CD4-positive, alpha-beta T cell (primary cell): ENCODE measurements at regions of chr15 and their contacts with region 1.

Region 1: DNA sequence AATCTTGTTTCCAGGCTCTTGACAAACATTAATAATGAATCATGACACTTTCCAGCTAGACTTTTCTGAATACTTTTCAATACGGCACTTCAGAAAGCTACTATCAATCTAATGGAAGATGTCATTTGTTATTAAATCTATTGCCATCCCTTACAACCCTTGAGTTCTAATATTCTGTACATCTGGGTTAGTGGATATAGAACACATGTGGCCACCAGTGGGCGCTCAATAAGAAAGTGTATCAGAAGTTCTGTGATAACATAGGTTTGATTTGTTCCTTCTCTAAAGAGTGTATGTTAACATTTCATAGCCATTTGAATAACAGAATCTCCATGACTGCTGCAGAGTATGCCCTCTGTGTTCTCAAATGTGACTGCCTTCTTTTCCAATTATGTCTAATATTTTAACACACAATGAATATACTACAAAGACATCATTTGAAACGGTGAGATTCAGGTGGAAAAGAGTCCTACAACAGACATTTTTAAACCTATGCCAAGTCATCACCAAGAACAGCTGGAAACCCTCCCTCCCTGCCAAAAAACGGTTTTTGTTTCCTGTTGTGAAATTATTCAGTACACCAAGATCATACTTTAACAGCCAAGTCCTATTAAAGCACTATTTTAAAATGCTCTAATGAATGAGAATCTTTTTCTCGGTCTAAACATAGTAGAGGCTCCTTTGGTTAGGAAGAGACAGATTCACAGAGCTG is 22.2 kb downstream of the ALDH1A2 start:
- DNase-seq: peak in 9 of 14 experiments; percentile 13 to 56 (median 37)
- ATAC-seq: no peak
- H3K4me3 ChIP-seq: no peak overlapping the region
- H3K4me3 Mint-ChIP-seq: no peak overlapping the region
- H3K27ac ChIP-seq: no peak overlapping the region
- H3K27ac Mint-ChIP-seq: no peak overlapping the region
- H3K4me1 ChIP-seq: no peaks in the 10 kb centered on the region
- H3K4me1 Mint-ChIP-seq: no peaks in the 10 kb centered on the region
- H3K27me3 ChIP-seq: peaks cover 2 to 18% of the 10 kb centered on the region in 2 experiments
- H3K27me3 Mint-ChIP-seq: peaks cover 65% of the 10 kb centered on the region
- CTCF ChIP-seq: peak; percentile 63

Region 2: GRCh38 chr15:58182460-58183163 is 139.3 kb after region 1 on chr15:
- CTCF ChIA-PET with region 1: no interaction called
- POLR2A ChIA-PET with region 1: no interaction called
- intact Hi-C with region 1: loop called (anchors 1 to 5 kb)
- DNase-seq: peak in 4 of 14 experiments; percentile 2 to 52 (median 36)
- ATAC-seq: no peak
- H3K4me3 ChIP-seq: no peak overlapping the region
- H3K4me3 Mint-ChIP-seq: no peak overlapping the region
- H3K27ac ChIP-seq: no peak overlapping the region
- H3K27ac Mint-ChIP-seq: no peak overlapping the region
- H3K4me1 ChIP-seq: peaks cover 4% of the 10 kb centered on the region
- H3K4me1 Mint-ChIP-seq: peaks cover 7% of the 10 kb centered on the region
- H3K27me3 ChIP-seq: peaks cover 8 to 20% of the 10 kb centered on the region in 2 experiments
- H3K27me3 Mint-ChIP-seq: peaks cover 38% of the 10 kb centered on the region
- CTCF ChIP-seq: peak; percentile 34